Heart right ventricle (tissue), 16 donors: ENCODE measurements at regions of chr6 and their contacts with region 1.

Region 1: DNA sequence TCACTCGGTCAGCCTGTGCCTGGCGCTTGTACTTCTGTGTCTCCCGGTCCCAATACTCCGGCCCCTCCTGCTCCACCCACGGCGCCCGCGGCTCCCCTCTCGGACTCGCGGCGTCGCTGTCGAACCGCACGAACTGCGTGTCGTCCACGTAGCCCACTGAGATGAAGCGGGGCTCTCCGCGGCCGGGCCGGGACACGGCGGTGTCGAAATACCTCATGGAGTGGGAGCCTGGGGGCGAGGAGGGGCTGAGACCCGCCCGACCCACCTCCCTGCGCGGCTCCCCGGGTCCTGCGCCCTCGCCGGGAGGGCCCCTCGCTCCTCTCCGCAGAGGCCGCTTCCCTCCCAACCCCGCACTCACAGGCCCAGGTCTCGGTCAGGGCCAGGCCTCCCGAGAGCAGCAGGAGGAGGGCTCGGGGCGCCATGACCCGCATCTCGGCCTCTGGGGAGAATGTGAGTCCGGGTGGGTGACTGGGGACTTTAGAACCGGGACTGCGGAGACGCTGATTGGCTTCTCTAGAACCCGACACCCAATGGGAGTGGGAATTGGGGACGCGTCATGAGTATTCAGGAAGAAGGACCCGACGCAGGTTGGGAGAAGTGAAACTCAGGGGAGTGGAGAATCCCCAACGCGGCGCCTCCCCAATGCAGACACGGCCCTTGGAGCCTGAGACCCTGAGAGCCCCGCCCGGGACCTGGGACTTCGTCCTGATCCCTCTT is at the start of gene HLA-C:
- DNase-seq: peak; percentile 84 to 95
- ATAC-seq: peak; percentile 97 to 99 (median 98)
- H3K4me3 ChIP-seq: peak within 1 kb of the TSS; percentile 31 to 97 (median 77)
- H3K27ac ChIP-seq: peak within 1 kb of the TSS; percentile 72 to 100 (median 98)
- H3K4me1 ChIP-seq: peaks cover 0 to 25% (median 7%) of the 10 kb centered on the region in 9 donors
- H3K27me3 ChIP-seq: no peaks in the 10 kb centered on the region
- CTCF ChIP-seq: peak in 1 of 9 donors; percentile 25
- total RNA-seq, gene HLA-C: 121 to 1,262 (median 232) TPM

Region 2: DNA sequence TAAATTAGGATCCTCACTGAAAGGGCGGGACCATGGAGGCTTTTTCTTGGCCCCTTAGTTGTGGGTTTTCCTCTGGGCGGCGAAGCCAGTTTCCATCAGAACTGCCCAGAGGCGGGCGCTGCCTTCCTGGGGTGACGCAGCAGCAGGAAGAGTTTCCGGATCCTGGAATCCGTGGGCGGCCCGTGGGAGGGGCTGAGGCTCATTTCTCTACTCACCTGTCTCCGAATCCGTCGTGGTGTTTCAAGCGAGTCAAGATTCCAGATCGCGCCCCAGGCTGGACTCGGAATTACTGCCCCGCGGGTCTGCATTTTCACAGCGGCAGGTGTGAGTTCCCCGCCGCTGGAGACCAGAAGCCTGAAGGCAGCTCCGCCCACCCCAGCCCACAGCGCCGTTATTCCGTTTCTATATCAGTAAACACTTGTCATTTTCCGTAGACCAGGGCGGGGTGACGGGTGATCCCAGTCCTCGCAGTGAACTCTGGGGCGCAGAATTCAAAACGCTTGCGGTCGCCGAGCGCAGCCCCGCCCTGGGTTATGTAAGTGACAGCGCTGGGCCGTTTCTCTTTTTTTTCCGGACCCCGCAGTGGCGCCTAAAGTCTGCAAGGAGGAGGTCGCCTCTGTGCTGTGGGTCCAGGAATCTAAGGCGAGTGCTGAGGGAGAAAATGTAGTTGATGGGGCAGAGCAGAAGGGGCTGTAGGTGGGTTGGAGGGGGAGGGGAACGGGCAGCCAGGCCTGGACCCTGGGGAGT is 74.1 kb before region 1 on chr6:
- intact Hi-C with region 1: loop called in 8 of 10 experiments (anchors 2 to 5 kb)
- DNase-seq: peak; percentile 88 to 95
- ATAC-seq: peak; percentile 89 to 95 (median 92)
- H3K4me3 ChIP-seq: peak overlapping the region; percentile 47 to 79 (median 64)
- H3K27ac ChIP-seq: peak overlapping the region; percentile 91 to 100 (median 98)
- H3K4me1 ChIP-seq: peaks cover 0 to 43% (median 19%) of the 10 kb centered on the region in 9 donors
- H3K27me3 ChIP-seq: no peaks in the 10 kb centered on the region
- CTCF ChIP-seq: no peak

Region 3: DNA sequence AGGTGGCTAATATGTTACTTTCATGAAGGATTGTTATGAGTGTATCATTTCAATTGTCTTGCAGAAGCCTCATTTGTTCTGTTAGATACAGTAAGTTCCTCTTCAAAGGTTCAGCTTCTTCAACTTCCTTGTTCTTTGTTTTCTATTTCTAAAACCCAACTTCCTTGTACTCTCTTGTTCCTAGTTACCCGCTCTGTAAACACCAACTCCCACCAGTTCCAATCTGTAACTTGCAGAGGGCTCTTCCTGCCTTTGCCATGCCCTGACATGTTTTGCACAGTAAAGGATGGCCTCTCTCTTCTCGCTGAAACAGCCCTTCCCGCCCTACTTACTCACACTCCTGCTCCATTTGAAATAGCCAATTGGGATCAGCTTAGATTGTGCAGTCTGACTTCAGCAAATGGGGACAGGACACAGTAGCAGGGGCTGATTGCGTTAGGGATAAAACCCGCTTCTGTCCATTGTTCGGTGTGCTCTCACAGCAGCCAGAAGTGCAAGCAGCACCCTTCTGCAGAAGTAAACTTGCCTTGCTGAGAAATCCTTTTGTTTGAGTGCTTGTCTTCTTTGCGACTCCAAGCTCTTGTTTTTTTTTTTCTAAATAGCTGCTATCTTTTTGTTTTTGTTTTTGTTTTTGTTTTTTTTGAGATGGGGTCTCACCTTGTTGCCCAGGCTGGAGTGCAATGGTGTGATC is 55.4 kb before region 1 on chr6:
- intact Hi-C with region 1: loop called in 1 of 10 experiments (anchors 10 kb)
- DNase-seq: no peak
- ATAC-seq: peak in 5 of 8 donors; percentile 39 to 72 (median 70)
- H3K4me3 ChIP-seq: no peak overlapping the region
- H3K27ac ChIP-seq: peak overlapping the region in 1 of 10 donors; percentile 74
- H3K4me1 ChIP-seq: peaks cover 0 to 7% (median 0%) of the 10 kb centered on the region in 9 donors
- H3K27me3 ChIP-seq: no peaks in the 10 kb centered on the region
- CTCF ChIP-seq: no peak

Region 4: GRCh38 chr6:31356946-31357466 is 85.2 kb after region 1 on chr6 and contains the start of gene HLA-B:
- intact Hi-C with region 1: loop called in 9 of 10 experiments (anchors 2 to 5 kb)
- DNase-seq: peak; percentile 88 to 94
- ATAC-seq: peak; percentile 96 to 98 (median 97)
- H3K4me3 ChIP-seq: peak within 1 kb of the TSS; percentile 57 to 98 (median 74)
- H3K27ac ChIP-seq: peak within 1 kb of the TSS in 9 of 10 donors; percentile 79 to 99 (median 90)
- H3K4me1 ChIP-seq: peaks cover 0 to 48% (median 16%) of the 10 kb centered on the region in 9 donors
- H3K27me3 ChIP-seq: peaks cover 0 to 23% (median 0%) of the 10 kb centered on the region in 7 donors
- CTCF ChIP-seq: no peak
- total RNA-seq, gene HLA-B: 252 to 2,676 (median 383) TPM